ENCODE measurements at regions of chr10 and their contacts with region 1.

Region 1: DNA sequence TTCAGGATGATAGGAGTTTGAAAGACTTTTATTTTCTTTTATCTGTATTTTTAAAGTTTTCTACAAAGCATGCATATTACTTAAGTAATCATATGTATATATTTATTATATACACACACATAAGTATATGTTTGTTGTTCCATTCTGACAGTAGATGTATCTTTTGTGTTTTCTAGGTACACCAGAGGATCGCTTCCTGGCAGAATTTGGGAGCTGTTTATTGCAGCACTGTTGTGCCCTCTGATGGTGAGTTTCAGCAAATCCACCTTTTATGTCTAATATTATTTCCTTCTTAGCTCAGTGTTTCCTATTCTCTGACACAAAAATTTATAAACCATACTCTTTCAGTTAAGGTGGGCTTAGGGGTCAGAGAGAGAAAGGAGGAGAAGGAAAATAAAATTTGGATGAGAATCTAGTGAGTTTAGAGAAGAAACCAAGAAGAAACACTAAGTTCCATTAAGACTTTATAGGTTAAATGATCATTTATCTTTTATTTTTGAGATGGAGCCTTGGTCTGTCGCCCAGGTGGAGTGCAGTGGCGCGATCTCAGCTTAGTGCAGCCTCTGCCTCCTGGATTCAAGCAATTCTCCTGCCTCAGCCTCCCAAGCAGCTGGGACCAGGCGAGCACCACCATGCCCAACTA is 59.2 kb upstream of the OIT3 start:
- DNase-seq: peak; percentile 72 to 86 (median 79)
- H3K4me3 ChIP-seq: no peak overlapping the region
- H3K27ac ChIP-seq: no peak overlapping the region
- H3K4me1 ChIP-seq: no peaks in the 10 kb centered on the region
- H3K27me3 ChIP-seq: no peaks in the 10 kb centered on the region

Region 2: DNA sequence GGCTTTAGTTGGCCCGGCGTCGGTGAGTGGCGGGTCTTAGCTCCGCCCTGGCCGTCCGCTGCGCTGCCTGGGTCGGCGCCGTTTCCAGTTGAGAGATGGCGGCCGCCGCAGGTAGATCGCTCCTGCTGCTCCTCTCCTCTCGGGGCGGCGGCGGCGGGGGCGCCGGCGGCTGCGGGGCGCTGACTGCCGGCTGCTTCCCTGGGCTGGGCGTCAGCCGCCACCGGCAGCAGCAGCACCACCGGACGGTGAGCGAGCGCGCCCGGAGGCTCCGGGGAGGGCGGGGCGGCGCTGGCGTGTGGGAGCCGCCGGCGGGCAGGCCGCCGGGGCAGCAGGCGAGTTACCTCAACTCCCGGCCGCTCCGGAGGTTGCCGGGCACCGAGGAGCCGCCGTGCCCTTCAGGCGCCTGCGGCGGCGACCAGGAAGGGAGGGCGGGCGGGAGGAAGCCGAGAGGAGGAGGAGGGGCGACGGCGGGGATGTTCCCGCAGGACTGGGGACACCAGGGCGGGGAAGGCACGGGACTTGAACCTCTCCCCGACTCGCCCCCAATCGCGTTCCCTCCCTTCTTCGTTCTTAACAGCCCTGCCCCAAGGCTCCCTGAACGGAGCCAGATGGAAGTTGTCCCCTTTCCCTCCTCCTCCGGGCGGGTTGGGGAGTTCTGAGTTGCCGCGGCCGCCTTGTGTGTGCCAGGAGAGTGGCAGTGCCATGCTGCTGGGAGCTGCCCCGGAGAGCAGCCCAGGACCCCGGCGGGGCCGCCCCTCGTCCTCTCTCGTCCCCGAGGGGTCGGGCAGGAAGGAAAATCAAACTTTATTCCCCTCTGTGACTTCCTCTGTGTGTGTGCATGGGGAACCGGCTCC is 142.0 kb before region 1 on chr10 and contains the start of gene MCU:
- CTCF ChIA-PET with region 1: interaction called, 43 read pairs
- POLR2A ChIA-PET with region 1: no interaction called
- DNase-seq: peak; percentile 93 to 96 (median 95)
- H3K4me3 ChIP-seq: peak within 1 kb of the TSS; percentile 79 to 98 (median 85)
- H3K27ac ChIP-seq: peak within 1 kb of the TSS in 1 of 2 experiments; percentile 55
- H3K4me1 ChIP-seq: peaks cover 19 to 33% (median 25%) of the 10 kb centered on the region in 4 experiments
- H3K27me3 ChIP-seq: no peaks in the 10 kb centered on the region

Region 3: GRCh38 chr10:72846225-72846624 is 11.9 kb after region 1 on chr10:
- CTCF ChIA-PET with region 1: interaction called, 10 read pairs
- POLR2A ChIA-PET with region 1: no interaction called
- DNase-seq: no peak
- H3K4me3 ChIP-seq: no peak overlapping the region
- H3K27ac ChIP-seq: no peak overlapping the region
- H3K4me1 ChIP-seq: no peaks in the 10 kb centered on the region
- H3K27me3 ChIP-seq: peaks cover 0 to 3% (median 0%) of the 10 kb centered on the region in 5 experiments

Measured in common myeloid progenitor, CD34-positive (primary cell).